ENCODE measurements at regions of chr1 and their contacts with region 1.

Region 1: DNA sequence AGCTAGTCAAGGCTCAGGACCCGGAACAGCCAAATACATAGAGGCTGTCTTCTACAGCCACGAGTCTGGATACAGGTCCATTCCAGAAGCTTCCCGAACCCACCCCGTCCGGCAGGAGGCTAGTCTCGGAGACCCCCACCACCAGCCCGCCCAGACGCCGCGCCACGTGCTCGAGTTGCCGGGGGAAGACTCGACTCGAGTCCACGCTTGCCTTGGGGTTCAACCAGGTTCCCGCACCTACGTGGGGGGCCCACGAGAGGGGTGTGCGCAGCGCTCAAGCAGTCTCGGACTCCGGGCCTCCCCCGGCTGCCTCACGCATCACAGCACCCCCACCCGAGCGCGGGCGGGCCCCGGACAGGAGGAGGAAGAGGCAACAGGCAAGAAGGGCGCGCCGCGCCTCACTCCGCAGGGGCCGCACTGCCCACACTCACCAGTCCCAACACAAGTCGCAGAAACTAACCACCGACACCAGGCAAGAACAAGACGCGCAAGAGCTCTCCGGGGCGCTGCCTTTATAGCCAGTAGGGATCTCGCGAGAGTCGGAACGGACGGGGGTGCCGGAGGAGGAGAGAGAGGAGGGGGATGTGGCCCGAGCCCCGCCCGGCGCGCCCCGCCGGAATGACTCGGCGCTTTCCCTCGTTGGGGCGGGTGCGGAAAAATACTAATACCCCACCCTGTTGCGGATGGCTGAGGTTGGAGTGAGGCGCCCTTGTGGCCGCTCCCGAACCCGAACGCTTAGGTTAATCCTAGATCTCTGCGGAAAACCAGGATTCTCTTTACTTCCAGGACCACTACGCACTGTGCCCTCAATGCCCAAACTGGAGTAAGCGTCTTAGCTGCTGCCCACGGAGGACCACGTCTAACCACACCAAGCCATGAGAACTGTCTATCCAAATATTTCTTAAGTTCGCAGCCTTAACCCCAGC is at the start of gene PRDX1:
- DNase-seq: peak; percentile 96
- H3K4me3 Mint-ChIP-seq: peak within 1 kb of the TSS; percentile 93
- H3K27ac Mint-ChIP-seq: peak within 1 kb of the TSS; percentile 88
- H3K4me1 Mint-ChIP-seq: peaks cover 46% of the 10 kb centered on the region
- H3K27me3 Mint-ChIP-seq: no peaks in the 10 kb centered on the region
- total RNA-seq, gene PRDX1: 596 to 641 TPM

Region 2: DNA sequence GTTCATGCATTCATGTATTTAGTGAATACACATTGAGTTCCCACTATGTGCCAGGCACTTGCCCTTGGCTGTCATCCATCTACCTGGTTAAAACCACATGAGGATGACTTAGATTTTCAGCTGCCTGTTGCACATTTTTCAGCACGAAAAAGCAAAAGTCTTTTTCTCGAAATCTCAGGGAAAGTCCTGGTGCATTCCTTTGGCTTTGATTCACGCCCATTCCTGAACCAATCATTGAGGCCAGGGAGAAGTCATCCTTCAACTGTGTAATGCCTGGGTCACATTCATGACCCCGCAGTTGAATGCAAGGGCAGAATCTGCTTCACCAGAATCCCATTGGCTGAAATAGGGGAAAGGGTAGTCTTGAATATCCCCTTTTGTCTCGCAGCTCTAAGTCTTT is 1032.2 kb before region 1 on chr1:
- CTCF ChIA-PET with region 1: no interaction called
- intact Hi-C with region 1: no loop called
- DNase-seq: no peak
- H3K4me3 Mint-ChIP-seq: no peak overlapping the region
- H3K27ac Mint-ChIP-seq: no peak overlapping the region
- H3K4me1 Mint-ChIP-seq: no peaks in the 10 kb centered on the region
- H3K27me3 Mint-ChIP-seq: peaks cover 8% of the 10 kb centered on the region

Region 3: GRCh38 chr1:45339789-45340570 is 181.7 kb before region 1 on chr1 and contains the starts of genes MUTYH and TOE1:
- CTCF ChIA-PET with region 1: no interaction called
- intact Hi-C with region 1: loop called (anchors 1 kb)
- DNase-seq: peak; percentile 95
- H3K4me3 Mint-ChIP-seq: peak within 1 kb of the TSS; percentile 100
- H3K27ac Mint-ChIP-seq: peak within 1 kb of the TSS; percentile 100
- H3K4me1 Mint-ChIP-seq: peaks cover 35% of the 10 kb centered on the region
- H3K27me3 Mint-ChIP-seq: no peaks in the 10 kb centered on the region
- total RNA-seq, gene MUTYH: 42.0 to 45.0 TPM
- total RNA-seq, gene TOE1: 23.0 to 23.8 TPM

Region 4: DNA sequence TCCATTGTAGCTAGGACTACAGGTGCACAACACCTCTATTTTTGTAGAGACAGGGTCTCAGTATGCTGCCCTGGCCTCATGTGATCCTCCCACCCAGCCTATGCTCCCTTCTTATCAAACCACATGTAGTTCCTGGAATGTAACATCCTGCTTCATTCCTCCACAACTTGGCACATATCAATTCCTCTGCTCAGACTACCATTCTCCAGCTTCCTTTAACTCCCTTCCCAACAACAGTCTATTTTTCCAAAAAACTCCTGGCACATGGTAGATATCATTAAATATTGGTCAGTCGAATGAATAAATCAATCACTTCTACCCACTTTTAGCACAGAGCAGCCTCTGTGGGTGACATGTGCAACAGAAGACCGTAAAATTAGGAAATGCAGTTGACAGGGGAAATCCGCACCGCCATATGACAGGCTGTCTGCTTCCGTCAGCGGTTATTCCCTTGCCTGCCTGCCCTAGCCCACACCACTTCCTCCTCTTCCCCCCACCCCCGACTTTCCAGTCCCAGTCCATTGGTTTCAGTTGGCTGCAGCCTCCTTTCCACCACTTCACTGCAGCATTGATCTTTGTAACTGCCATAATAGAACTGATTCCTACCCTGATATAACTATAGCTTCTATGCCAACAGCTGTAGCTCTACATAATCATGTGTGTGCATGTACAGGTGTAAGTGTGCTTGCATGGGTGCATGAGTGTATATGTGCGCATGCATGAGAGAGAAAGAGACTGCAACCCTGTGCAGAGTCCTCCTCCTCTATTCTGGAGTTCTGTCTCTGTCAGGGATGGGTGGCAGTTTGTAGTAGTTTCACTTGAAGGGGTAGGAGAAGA is 22.1 kb after region 1 on chr1:
- CTCF ChIA-PET with region 1: interaction called, 5 read pairs
- intact Hi-C with region 1: loop called (anchors 1 kb)
- DNase-seq: peak; percentile 90
- H3K4me3 Mint-ChIP-seq: peak overlapping the region; percentile 25
- H3K27ac Mint-ChIP-seq: peak overlapping the region; percentile 74
- H3K4me1 Mint-ChIP-seq: peaks cover 34% of the 10 kb centered on the region
- H3K27me3 Mint-ChIP-seq: no peaks in the 10 kb centered on the region

Region 5: DNA sequence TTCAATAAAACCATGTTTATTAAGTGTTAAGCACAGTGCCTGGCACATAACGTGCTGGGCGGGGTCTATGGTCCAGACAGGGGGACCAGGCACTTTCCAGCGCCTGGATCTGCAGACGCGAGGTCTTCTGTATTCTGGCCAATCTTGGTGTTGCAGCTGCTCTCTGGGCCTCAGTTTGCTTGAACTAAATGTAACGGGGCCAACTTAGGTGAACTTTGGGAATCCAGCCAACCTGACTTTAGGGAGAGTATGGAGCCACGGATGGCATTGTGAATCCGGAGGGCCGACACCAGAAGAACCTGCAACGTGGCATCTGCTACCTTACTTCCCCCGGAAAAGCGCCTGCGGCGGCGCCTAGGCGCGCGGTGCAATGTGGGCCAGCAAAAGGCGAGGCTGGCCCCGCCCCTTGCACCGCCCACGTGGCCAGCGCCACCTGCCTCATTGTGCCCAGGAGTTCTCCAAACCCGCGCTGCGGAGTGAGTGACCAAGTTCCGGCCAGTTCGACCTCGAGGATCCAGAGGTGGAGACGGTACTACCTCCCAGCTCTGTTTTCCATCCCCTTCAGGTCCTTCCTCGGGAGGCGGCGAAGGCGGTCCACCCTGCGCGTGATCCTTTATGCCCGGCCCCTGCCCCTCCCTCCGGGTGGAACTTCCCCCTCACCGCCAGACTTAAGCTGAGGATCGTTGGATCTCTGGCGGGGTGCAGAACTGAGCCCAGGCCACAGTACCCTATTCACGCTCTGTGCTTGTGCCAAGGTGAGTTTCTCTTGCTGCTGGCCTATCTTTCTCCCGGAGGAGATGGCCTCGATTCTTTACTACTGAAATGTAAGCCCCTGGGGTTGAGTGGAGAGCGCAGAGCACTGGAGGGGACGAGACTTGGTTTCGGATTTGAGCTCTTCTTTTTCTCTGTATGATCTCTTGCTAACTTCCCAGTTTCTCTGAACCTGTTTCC is 29.0 kb after region 1 on chr1 and contains the start of gene AKR1A1:
- CTCF ChIA-PET with region 1: interaction called, 9 read pairs
- intact Hi-C with region 1: loop called (anchors 1 kb)
- DNase-seq: peak; percentile 93
- H3K4me3 Mint-ChIP-seq: peak within 1 kb of the TSS; percentile 96
- H3K27ac Mint-ChIP-seq: peak within 1 kb of the TSS; percentile 94
- H3K4me1 Mint-ChIP-seq: peaks cover 19% of the 10 kb centered on the region
- H3K27me3 Mint-ChIP-seq: no peaks in the 10 kb centered on the region
- total RNA-seq, gene AKR1A1: 207 to 217 TPM

Region 6: GRCh38 chr1:45569962-45570581 is 48.4 kb after region 1 on chr1:
- CTCF ChIA-PET with region 1: interaction called, 55 read pairs
- intact Hi-C with region 1: loop called (anchors 2 kb)
- DNase-seq: peak; percentile 87
- H3K4me3 Mint-ChIP-seq: no peak overlapping the region
- H3K27ac Mint-ChIP-seq: peak overlapping the region; percentile 34
- H3K4me1 Mint-ChIP-seq: peaks cover 2% of the 10 kb centered on the region
- H3K27me3 Mint-ChIP-seq: no peaks in the 10 kb centered on the region

Region 7: DNA sequence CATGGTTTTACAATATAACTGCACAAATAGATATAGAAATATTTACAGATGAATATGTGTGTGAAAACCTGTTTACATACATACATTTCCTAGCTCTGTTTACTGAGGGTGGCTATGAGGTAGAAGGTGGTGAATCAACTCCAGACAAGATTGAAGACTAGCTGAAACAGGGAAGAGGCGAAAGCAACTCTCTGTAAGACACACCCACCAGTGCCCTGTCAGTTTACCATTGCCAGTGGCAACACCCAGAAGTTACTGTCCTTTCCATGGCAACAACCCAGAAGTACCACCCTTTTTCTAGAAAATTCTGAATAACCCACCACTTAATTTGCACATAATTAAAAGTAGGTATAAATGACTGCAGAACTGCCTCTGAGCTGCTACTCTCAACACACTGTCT is 183.0 kb after region 1 on chr1:
- CTCF ChIA-PET with region 1: no interaction called
- intact Hi-C with region 1: no loop called
- DNase-seq: no peak
- H3K4me3 Mint-ChIP-seq: no peak overlapping the region
- H3K27ac Mint-ChIP-seq: no peak overlapping the region
- H3K4me1 Mint-ChIP-seq: no peaks in the 10 kb centered on the region
- H3K27me3 Mint-ChIP-seq: no peaks in the 10 kb centered on the region

Region 8: GRCh38 chr1:45750298-45751038 is 228.8 kb after region 1 on chr1 and contains the start of gene IPP:
- CTCF ChIA-PET with region 1: no interaction called
- intact Hi-C with region 1: loop called (anchors 1 kb)
- DNase-seq: peak; percentile 96
- H3K4me3 Mint-ChIP-seq: peak within 1 kb of the TSS; percentile 95
- H3K27ac Mint-ChIP-seq: peak within 1 kb of the TSS; percentile 97
- H3K4me1 Mint-ChIP-seq: peaks cover 31% of the 10 kb centered on the region
- H3K27me3 Mint-ChIP-seq: no peaks in the 10 kb centered on the region
- total RNA-seq, gene IPP: 19.1 to 20.2 TPM

Measured in activated naive CD4-positive, alpha-beta T cell treated with anti-CD3 and anti-CD28 coated beads for 36 hours (primary cell).